RWPE1 (cell line): ENCODE measurements at regions of chr12 and their contacts with region 1.

Region 1: DNA sequence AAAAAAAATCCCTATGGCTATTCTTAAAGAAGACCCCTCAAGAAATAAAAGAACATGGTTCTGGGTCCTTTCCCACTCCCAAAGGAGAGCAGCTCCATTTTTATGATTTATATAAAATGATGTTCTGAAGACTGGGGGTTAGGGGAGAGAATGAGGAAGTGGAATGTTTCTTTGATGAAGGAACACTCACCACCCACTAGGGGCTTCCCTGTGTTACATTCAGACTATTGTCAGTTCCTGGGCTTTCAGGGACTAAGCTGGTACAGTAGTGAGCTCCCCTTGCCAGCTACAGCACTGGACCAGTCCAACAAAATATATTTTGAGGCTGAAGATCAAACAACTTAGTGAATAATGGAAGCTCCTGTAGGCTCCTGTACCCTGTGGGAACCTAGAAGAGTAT is 98.9 kb downstream of the HMGA2 start:
- DNase-seq: no peak
- H3K27ac ChIP-seq: peak overlapping the region; percentile 52
- CTCF ChIP-seq: no peak

Region 2: GRCh38 chr12:66035288-66035966 is 112.2 kb after region 1 on chr12:
- CTCF ChIA-PET with region 1: interaction called, 11 read pairs
- POLR2A ChIA-PET with region 1: no interaction called
- DNase-seq: peak; percentile 32
- H3K27ac ChIP-seq: no peak overlapping the region
- CTCF ChIP-seq: peak; percentile 46